SK-N-SH (cell line): ENCODE measurements at regions of chr12 and their contacts with region 1.

Region 1: DNA sequence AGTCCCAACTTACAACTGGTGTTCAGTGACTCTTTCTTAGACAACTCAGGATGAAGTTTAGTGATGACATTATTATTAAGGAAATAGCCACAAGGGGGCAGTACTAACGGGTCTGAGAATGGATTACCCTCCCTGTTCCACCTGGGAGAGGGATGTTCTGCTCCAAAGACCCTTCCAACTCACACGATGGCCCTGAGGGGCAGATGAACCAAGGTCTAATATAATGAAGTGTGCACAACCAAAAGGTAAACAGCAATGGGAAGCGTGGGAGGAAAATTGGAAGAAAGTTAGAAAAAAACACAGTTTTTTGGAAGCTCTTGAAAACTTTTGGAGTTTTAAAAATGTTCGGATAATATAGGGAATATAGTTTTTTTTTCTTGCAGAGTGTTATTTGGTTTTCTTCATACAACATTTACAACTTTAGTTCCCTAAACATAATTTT is 24.0 kb downstream of the FGF6 start:
- DNase-seq: peak; percentile 82
- H3K4me3 ChIP-seq: no peak overlapping the region; a peak in 1 of 4 replicates
- H3K27ac ChIP-seq: no peak overlapping the region
- H3K4me1 ChIP-seq: peaks cover 0 to 15% of the 10 kb centered on the region in 2 experiments; a peak in 1 of 4 replicates
- H3K27me3 ChIP-seq: peaks cover 23% of the 10 kb centered on the region; the same call in 1 of the 2 replicates
- CTCF ChIP-seq: peak; percentile 77
- EP300 ChIP-seq: no peak
- RAD21 ChIP-seq: peak; percentile 57

Region 2: DNA sequence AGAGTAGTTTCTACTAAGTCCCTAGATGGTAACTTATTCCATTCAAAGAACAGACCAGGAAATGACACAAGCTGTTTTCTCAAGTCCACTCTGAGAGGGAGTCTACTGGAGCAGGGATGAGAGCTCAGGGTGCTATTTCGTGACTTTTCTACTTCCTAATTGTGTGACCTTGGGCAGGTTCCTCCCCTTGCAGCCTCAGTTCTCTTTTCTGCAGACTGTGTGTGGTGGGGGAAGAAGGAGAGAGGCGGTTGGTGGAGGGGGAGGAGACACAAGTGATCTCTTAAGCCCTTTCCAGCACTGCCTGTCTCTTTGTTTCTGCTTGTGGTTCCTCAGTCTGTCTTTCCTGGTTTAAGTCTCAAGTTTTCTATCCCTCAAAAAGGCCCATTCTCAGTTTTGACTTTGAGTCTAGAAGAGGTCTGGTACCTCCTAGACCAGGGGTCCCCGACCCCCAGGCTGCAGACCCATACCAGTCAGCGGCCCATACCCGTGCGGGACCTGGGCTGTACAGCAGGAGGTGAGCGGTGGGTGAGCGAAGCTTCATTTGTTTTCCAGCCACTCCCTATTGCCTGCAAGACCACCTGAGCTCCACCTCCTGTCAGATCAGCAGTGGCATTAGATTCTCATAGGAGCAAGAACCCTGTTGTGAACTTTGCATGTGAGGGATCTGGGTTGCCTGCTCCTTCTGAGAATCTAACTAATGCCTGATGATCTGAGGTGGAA is 13.3 kb after region 1 on chr12:
- CTCF ChIA-PET with region 1: interaction called, 12 read pairs
- POLR2A ChIA-PET with region 1: no interaction called
- DNase-seq: no peak
- H3K4me3 ChIP-seq: no peak overlapping the region
- H3K27ac ChIP-seq: no peak overlapping the region
- H3K4me1 ChIP-seq: no peaks in the 10 kb centered on the region
- H3K27me3 ChIP-seq: 0 out of 2 replicates have a peak, but pooled peaks cover 7% of the 10 kb centered on the region
- CTCF ChIP-seq: no peak
- EP300 ChIP-seq: no peak
- RAD21 ChIP-seq: no peak

Region 3: GRCh38 chr12:4445156-4446101 is 23.8 kb after region 1 on chr12 and contains the start of gene FGF6:
- CTCF ChIA-PET with region 1: interaction called, 13 read pairs
- POLR2A ChIA-PET with region 1: interaction called, 3 read pairs
- DNase-seq: no peak
- H3K4me3 ChIP-seq: no peak within 1 kb of the TSS
- H3K27ac ChIP-seq: no peak within 1 kb of the TSS
- H3K4me1 ChIP-seq: peaks cover 0 to 17% of the 10 kb centered on the region in 2 experiments; a peak in 1 of 4 replicates
- H3K27me3 ChIP-seq: peaks cover 19% of the 10 kb centered on the region; the same call in 1 of the 2 replicates
- CTCF ChIP-seq: no peak
- EP300 ChIP-seq: no peak
- RAD21 ChIP-seq: no peak
- polyA plus RNA-seq, gene FGF6: not detected in 2 replicates